Caco-2 (cell line): ENCODE measurements at regions of chr10 and their contacts with region 1.

Region 1: DNA sequence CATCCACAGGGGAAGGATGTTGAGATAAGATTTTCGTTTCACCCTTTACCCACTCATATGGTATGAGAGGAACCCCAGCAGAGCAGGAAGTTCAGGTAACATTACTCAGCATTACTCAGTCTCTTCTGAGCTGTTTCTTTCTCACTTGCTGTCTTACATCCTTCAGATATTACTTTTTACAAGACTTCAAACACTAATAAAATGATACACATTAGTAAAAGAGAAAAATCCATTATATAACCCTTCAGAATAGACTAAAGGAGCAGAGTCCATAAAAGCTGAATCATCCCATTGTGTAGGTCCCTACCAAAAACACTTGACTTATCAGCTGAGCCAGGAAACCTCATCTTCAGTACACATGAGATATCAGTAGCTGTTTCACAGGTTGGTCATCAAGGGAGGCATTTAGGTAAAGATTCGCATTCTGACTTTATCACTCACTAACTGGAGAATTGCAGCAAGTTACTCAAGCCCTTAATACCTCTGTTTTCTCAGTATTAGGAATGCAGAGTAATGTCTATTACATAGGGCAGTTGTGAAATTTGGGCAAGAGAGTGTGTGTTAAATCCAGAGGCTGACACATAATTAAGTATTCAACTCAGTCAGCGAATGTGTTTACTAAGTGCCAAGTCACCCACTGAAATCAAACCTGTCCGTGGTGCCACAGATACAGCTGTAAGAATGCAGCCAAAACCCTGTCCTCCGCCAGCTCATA is 44.7 kb downstream of the KLF6 start:
- DNase-seq: peak; percentile 77 to 81
- H3K4me3 ChIP-seq: no peak overlapping the region
- H3K4me3 Mint-ChIP-seq: peak overlapping the region; percentile 44
- H3K27ac Mint-ChIP-seq: peak overlapping the region; percentile 77
- H3K4me1 ChIP-seq: peaks cover 47% of the 10 kb centered on the region
- H3K4me1 Mint-ChIP-seq: peaks cover 47% of the 10 kb centered on the region
- H3K27me3 ChIP-seq: no peaks in the 10 kb centered on the region
- H3K27me3 Mint-ChIP-seq: no peaks in the 10 kb centered on the region
- CTCF ChIP-seq: no peak

Region 2: GRCh38 chr10:3172446-3173170 is 567.7 kb before region 1 on chr10 and contains the start of gene PITRM1:
- CTCF ChIA-PET with region 1: no interaction called
- POLR2A ChIA-PET with region 1: no interaction called
- intact Hi-C with region 1: loop called (anchors 5 kb)
- DNase-seq: peak; percentile 100
- H3K4me3 ChIP-seq: peak within 1 kb of the TSS; percentile 99
- H3K4me3 Mint-ChIP-seq: peak within 1 kb of the TSS; percentile 79
- H3K27ac Mint-ChIP-seq: peak within 1 kb of the TSS; percentile 81
- H3K4me1 ChIP-seq: peaks cover 5% of the 10 kb centered on the region; the same call in 1 of the 2 replicates
- H3K4me1 Mint-ChIP-seq: peaks cover 8% of the 10 kb centered on the region
- H3K27me3 ChIP-seq: no peaks in the 10 kb centered on the region
- H3K27me3 Mint-ChIP-seq: peaks cover 6% of the 10 kb centered on the region
- CTCF ChIP-seq: no peak
- total RNA-seq, gene PITRM1: 80.5 and 85.4 TPM in 2 replicates

Region 3: GRCh38 chr10:3482200-3483138 is 257.8 kb before region 1 on chr10:
- CTCF ChIA-PET with region 1: no interaction called
- POLR2A ChIA-PET with region 1: no interaction called
- intact Hi-C with region 1: loop called (anchors 10 kb)
- DNase-seq: peak; percentile 87 to 89
- H3K4me3 ChIP-seq: no peak overlapping the region
- H3K4me3 Mint-ChIP-seq: peak overlapping the region; percentile 64
- H3K27ac Mint-ChIP-seq: peak overlapping the region; percentile 90
- H3K4me1 ChIP-seq: peaks cover 35% of the 10 kb centered on the region
- H3K4me1 Mint-ChIP-seq: peaks cover 38% of the 10 kb centered on the region
- H3K27me3 ChIP-seq: no peaks in the 10 kb centered on the region
- H3K27me3 Mint-ChIP-seq: no peaks in the 10 kb centered on the region
- CTCF ChIP-seq: no peak

Region 4: GRCh38 chr10:3754727-3755439 is 14.6 kb after region 1 on chr10:
- CTCF ChIA-PET with region 1: interaction called, 6 read pairs
- POLR2A ChIA-PET with region 1: interaction called, 8 read pairs
- intact Hi-C with region 1: loop called (anchors 2 kb)
- DNase-seq: peak; percentile 64 to 76
- H3K4me3 ChIP-seq: no peak overlapping the region
- H3K4me3 Mint-ChIP-seq: peak overlapping the region; percentile 60
- H3K27ac Mint-ChIP-seq: peak overlapping the region; percentile 91
- H3K4me1 ChIP-seq: peaks cover 64% of the 10 kb centered on the region
- H3K4me1 Mint-ChIP-seq: peaks cover 49% of the 10 kb centered on the region
- H3K27me3 ChIP-seq: no peaks in the 10 kb centered on the region
- H3K27me3 Mint-ChIP-seq: no peaks in the 10 kb centered on the region
- CTCF ChIP-seq: no peak

Region 5: GRCh38 chr10:3776796-3777571 is 36.7 kb after region 1 on chr10:
- CTCF ChIA-PET with region 1: no interaction called
- POLR2A ChIA-PET with region 1: no interaction called
- intact Hi-C with region 1: loop called (anchors 1 kb)
- DNase-seq: peak; percentile 80 to 84
- H3K4me3 ChIP-seq: no peak overlapping the region
- H3K4me3 Mint-ChIP-seq: peak overlapping the region; percentile 17
- H3K27ac Mint-ChIP-seq: peak overlapping the region; percentile 48
- H3K4me1 ChIP-seq: peaks cover 69% of the 10 kb centered on the region
- H3K4me1 Mint-ChIP-seq: peaks cover 47% of the 10 kb centered on the region
- H3K27me3 ChIP-seq: no peaks in the 10 kb centered on the region
- H3K27me3 Mint-ChIP-seq: no peaks in the 10 kb centered on the region
- CTCF ChIP-seq: no peak

Region 6: GRCh38 chr10:3828404-3829155 is 88.3 kb after region 1 on chr10:
- CTCF ChIA-PET with region 1: no interaction called
- POLR2A ChIA-PET with region 1: no interaction called
- intact Hi-C with region 1: loop called (anchors 2 kb)
- DNase-seq: no peak
- H3K4me3 ChIP-seq: no peak overlapping the region
- H3K4me3 Mint-ChIP-seq: peak overlapping the region; percentile 53
- H3K27ac Mint-ChIP-seq: peak overlapping the region; percentile 94
- H3K4me1 ChIP-seq: peaks cover 84% of the 10 kb centered on the region
- H3K4me1 Mint-ChIP-seq: peaks cover 70% of the 10 kb centered on the region
- H3K27me3 ChIP-seq: no peaks in the 10 kb centered on the region
- H3K27me3 Mint-ChIP-seq: no peaks in the 10 kb centered on the region
- CTCF ChIP-seq: no peak

Region 7: DNA sequence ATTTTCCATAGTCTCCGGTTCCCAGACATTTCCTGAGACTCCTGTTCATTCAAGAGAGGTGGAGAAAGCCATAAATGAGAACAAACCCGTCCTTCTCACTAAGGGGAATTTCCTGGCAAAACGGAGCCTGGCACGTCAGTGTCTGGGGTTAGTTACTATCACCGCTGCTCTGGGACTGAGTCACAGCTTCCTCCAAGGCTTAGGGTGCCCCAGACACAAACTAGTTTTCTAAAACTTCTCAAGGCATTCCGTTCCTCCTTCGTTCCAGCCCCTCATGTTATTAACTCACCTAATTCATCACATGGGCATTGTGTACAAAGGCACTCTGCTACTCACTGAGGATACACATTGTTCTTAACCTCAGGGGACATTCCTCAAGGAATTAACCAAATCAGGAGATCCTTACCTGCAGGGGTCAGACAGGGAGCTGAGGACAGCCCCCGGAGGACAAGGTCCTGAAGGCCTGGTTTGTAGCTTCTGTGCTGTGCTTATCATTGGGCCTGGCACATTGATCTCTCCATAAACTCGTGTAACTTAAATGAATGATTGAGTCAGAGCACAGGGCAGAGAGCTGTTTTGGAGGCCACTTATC is 147.7 kb after region 1 on chr10:
- CTCF ChIA-PET with region 1: no interaction called
- POLR2A ChIA-PET with region 1: interaction called, 3 read pairs
- intact Hi-C with region 1: loop called (anchors 5 kb)
- DNase-seq: peak; percentile 77 to 89
- H3K4me3 ChIP-seq: no peak overlapping the region
- H3K4me3 Mint-ChIP-seq: peak overlapping the region; percentile 63
- H3K27ac Mint-ChIP-seq: peak overlapping the region; percentile 96
- H3K4me1 ChIP-seq: peaks cover 70% of the 10 kb centered on the region
- H3K4me1 Mint-ChIP-seq: peaks cover 61% of the 10 kb centered on the region
- H3K27me3 ChIP-seq: no peaks in the 10 kb centered on the region
- H3K27me3 Mint-ChIP-seq: no peaks in the 10 kb centered on the region
- CTCF ChIP-seq: no peak